K562 (cell line): ENCODE measurements at regions of chr13 and their contacts with region 1.

Region 1: GRCh38 chr13:113724780-113725315 is 34.2 kb upstream of the TMEM255B start:
- DNase-seq: peak; percentile 65 to 69 (median 66)
- ATAC-seq: peak; percentile 99
- H3K4me3 ChIP-seq: peak overlapping the region; percentile 38
- H3K27ac ChIP-seq: no peak overlapping the region
- H3K4me1 ChIP-seq: peaks cover 9 to 32% of the 10 kb centered on the region in 2 experiments; a peak in 4 of 5 replicates
- H3K27me3 ChIP-seq: peaks cover 7 to 16% of the 10 kb centered on the region in 2 experiments; a peak in 3 of 5 replicates
- CTCF ChIP-seq: peak; percentile 54 to 77 (median 72)
- EP300 ChIP-seq: no peak
- POLR2A ChIP-seq: no peak
- RAD21 ChIP-seq: peak; percentile 31 to 69; a peak in 3 of 4 replicates

Region 2: DNA sequence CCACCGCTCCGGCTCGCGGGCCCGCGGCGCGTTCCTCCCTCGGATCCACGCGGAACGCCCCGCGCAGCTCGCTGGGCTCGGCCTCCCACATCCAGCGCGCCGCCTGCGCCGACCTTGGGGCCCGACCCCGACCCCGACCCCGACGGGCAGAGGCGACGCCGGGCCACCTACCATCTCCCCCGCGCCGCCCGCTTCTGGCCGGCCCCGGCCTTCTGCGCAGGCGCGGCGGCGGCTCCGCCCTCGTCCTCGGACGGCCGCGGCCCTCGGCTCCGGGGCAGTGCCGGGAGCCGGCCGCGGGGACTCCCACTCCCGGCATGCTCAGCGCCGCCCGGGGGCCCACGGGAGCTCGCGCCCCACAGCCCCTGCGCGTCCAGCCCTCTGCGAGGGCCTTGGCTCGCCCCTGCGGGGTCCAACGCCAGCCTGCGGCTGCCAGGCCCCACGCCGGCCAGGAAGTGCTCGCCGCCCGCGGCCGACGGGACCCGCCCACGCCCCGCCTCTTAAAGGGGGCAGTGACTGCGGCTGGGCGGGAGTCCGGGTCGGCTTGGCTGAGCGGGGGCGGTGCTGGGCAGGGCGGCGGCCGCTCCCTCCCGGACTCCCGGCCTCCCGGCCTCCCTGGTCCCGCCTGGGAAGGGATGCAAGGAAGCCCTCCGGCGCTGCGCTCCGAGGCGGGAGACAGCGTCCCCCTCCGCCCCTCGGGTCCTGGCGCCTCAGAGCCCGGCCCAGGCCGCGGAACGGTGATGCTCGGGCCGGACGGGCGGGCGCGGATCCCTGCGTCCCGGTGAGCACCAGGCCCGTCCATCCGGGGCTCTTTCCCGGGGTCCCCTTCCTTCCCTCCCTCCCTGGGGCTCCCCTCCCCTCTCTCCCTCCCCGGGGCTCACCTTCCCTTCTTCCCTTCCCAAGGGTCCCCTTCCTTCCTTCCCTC is 234.1 kb before region 1 on chr13 and contains the start of gene DCUN1D2:
- CTCF ChIA-PET with region 1: no interaction called
- POLR2A ChIA-PET with region 1: no interaction called
- in situ Hi-C with region 1: loop called (anchors 10 kb)
- intact Hi-C with region 1: no loop called
- DNase-seq: peak; percentile 89 to 91 (median 89)
- ATAC-seq: peak; percentile 87
- H3K4me3 ChIP-seq: peak within 1 kb of the TSS; percentile 89
- H3K27ac ChIP-seq: peak within 1 kb of the TSS; percentile 88
- H3K4me1 ChIP-seq: peaks cover 15 to 36% of the 10 kb centered on the region in 2 experiments
- H3K27me3 ChIP-seq: no peaks in the 10 kb centered on the region
- CTCF ChIP-seq: no peak
- EP300 ChIP-seq: peak; percentile 4; the same call in 1 of the 2 replicates
- POLR2A ChIP-seq: peak; percentile 56
- RAD21 ChIP-seq: no peak
- polyA plus RNA-seq, gene DCUN1D2: 2.1 to 2.2 TPM

Region 3: GRCh38 chr13:113506025-113506685 is 218.7 kb before region 1 on chr13:
- CTCF ChIA-PET with region 1: no interaction called
- POLR2A ChIA-PET with region 1: no interaction called
- in situ Hi-C with region 1: no loop called
- intact Hi-C with region 1: no loop called
- DNase-seq: peak; percentile 24 to 57 (median 44)
- ATAC-seq: peak; percentile 75
- H3K4me3 ChIP-seq: no peak overlapping the region
- H3K27ac ChIP-seq: peak overlapping the region; percentile 82
- H3K4me1 ChIP-seq: peaks cover 14 to 37% of the 10 kb centered on the region in 2 experiments; a peak in 4 of 5 replicates
- H3K27me3 ChIP-seq: no peaks in the 10 kb centered on the region
- CTCF ChIP-seq: no peak
- EP300 ChIP-seq: peak; percentile 64; the same call in 1 of the 2 replicates
- POLR2A ChIP-seq: 0 out of 2 replicates have a peak, but pooled peaks have one; percentile 47
- RAD21 ChIP-seq: no peak

Region 4: DNA sequence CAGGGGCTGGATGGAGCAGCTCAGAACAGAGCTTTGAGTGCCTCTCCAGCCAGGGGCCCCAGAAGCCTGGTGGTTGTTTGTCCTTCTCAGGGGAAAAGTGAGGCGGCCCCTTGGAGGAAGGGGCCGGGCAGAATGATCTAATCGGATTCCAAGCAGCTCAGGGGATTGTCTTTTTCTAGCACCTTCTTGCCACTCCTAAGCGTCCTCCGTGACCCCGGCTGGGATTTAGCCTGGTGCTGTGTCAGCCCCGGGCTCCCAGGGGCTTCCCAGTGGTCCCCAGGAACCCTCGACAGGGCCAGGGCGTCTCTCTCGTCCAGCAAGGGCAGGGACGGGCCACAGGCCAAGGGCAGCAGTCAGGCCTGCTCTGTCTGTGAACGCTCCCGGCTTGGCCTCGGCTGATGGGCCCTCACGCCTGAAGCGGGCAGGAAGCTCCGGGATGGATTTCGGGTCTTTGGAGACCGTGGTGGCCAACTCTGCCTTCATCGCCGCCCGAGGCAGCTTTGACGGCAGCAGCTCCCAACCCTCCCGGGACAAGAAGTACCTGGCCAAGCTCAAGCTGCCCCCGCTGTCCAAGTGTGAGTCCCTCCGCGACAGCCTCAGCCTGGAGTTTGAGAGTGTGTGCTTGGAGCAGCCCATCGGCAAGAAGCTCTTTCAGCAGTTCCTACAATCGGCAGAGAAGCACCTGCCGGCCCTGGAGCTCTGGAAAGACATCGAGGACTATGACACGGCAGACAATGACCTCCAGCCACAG is 57.7 kb before region 1 on chr13 and contains the start of gene GRK1:
- CTCF ChIA-PET with region 1: no interaction called
- POLR2A ChIA-PET with region 1: interaction called, 4 read pairs
- in situ Hi-C with region 1: loop called (anchors 10 kb)
- intact Hi-C with region 1: no loop called
- DNase-seq: no peak
- ATAC-seq: peak; percentile 47; the same call in 2 of the 3 replicates
- H3K4me3 ChIP-seq: no peak within 1 kb of the TSS
- H3K27ac ChIP-seq: no peak within 1 kb of the TSS
- H3K4me1 ChIP-seq: peaks cover 0 to 17% of the 10 kb centered on the region in 2 experiments; a peak in 2 of 5 replicates
- H3K27me3 ChIP-seq: peaks cover 24 to 59% of the 10 kb centered on the region in 2 experiments; a peak in 3 of 5 replicates
- CTCF ChIP-seq: no peak
- EP300 ChIP-seq: no peak
- POLR2A ChIP-seq: no peak
- RAD21 ChIP-seq: no peak
- polyA plus RNA-seq, gene GRK1: not detected

Region 5: DNA sequence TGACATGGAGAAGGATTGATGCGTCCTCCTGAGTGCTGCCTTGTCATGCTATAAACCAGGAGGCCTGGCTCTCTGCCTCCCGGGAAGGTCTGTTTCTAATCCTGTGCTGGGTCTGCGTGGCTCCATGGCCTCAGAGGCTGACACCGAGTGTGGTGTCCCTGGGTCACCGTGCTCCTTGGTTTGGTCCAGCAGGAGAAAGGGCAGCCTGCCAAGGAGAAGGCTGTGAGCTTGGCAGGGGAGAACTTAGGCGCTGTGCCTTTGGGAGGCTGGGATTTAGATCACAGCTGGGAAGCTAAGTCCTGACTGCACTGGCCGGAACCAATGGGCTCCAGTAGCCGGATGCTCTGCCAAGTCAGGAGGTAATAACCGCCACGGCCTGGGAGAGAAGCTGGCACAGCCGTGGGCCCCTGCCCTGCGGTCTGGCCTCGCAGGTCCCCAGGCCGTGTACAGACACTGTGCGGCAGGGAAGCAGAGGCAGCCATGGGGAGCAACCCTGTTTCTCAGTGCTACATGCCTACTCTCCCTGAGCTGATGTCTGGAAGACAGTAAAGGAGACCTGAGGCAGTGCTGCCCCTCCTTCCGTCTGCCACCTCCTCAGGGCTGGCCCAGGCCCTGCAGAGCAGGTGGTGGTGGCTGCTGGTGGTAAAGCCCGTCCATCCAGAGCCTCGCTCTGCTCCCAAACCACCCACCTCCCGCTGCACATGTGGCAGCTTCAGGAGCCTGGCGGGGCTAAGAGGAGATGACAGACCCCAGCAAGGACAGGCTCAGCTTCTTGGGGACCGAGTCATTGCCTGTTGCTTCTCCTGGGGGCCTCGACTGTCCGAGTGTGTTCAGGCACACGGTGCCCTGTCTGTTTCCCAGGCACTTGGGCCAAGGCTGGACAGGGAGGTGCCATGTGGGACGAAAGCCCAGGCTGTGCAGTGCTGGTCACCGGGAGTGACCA is 204.1 kb after region 1 on chr13:
- CTCF ChIA-PET with region 1: no interaction called
- POLR2A ChIA-PET with region 1: no interaction called
- in situ Hi-C with region 1: loop called (anchors 10 kb)
- intact Hi-C with region 1: no loop called
- DNase-seq: no peak
- ATAC-seq: no peak
- H3K4me3 ChIP-seq: no peak overlapping the region
- H3K27ac ChIP-seq: no peak overlapping the region
- H3K4me1 ChIP-seq: peaks cover 0 to 3% of the 10 kb centered on the region in 2 experiments; a peak in 1 of 5 replicates
- H3K27me3 ChIP-seq: peaks cover 16 to 67% of the 10 kb centered on the region in 2 experiments; a peak in 4 of 5 replicates
- CTCF ChIP-seq: no peak
- EP300 ChIP-seq: no peak
- POLR2A ChIP-seq: no peak
- RAD21 ChIP-seq: no peak